ENCODE measurements at regions of chr4 and their contacts with region 1.

Region 1: DNA sequence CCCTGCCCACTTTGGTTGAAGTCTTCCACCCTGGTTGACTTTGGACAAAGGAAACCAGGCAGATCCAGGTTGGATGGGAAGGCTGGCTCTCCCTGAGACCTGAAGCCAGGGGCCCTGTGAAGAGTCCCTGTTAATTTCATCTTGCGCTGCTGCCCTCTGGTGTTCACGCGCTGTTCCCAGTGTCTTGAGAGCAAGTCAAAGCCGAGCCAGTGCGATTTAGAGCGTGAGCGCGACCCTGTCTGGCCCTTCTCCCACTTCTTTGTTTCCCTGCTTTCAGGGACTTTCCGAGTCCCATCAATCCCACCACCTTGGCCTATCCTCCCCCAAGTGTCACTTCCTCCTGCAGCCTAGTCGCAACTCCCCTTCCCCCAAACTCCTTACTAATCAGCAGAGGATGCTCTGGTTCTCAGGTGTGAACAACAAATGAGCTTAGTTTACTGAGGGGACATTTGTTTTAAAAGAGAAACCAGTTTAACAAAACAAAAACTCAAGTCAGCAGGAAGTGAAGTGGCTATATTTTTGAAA is 25.8 kb upstream of the CHRNA9 start:
- DNase-seq: peak; percentile 90
- ATAC-seq: peak; percentile 85 to 92

Region 2: GRCh38 chr4:39469429-39470077 is 839.8 kb before region 1 on chr4:
- intact Hi-C with region 1: loop called in 1 of 2 experiments (anchors 5 kb)
- DNase-seq: peak; percentile 42
- ATAC-seq: peak; percentile 84 to 91

Region 3: GRCh38 chr4:40056716-40057585 is 252.4 kb before region 1 on chr4 and contains the start of gene N4BP2:
- intact Hi-C with region 1: loop called (anchors 5 to 10 kb)
- DNase-seq: peak; percentile 87
- ATAC-seq: peak; percentile 87 to 88
- total RNA-seq, gene N4BP2: 4.3 to 4.7 TPM

Region 4: DNA sequence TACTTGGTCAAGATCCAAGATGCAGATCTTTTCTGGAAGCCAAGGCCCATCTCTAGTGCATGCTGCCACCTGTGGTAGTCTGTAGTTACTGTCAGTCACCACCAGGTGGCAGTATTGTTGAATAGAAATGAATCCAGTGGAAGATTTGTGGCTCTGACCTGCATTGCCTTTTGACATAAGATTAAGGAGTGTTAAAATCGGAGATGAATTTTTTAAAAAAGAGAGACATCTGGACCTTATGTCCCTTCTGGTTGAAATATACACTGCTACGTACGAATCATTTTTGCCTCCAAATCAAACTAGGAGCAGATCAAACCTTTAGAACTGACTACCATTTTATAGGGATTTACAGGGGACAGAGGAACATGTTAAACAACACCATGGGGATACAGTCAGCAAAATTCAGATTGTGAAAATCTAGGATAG is 159.3 kb before region 1 on chr4:
- intact Hi-C with region 1: loop called (anchors 5 kb)
- DNase-seq: peak; percentile 36
- ATAC-seq: peak in 1 of 2 donors; percentile 68

Region 5: DNA sequence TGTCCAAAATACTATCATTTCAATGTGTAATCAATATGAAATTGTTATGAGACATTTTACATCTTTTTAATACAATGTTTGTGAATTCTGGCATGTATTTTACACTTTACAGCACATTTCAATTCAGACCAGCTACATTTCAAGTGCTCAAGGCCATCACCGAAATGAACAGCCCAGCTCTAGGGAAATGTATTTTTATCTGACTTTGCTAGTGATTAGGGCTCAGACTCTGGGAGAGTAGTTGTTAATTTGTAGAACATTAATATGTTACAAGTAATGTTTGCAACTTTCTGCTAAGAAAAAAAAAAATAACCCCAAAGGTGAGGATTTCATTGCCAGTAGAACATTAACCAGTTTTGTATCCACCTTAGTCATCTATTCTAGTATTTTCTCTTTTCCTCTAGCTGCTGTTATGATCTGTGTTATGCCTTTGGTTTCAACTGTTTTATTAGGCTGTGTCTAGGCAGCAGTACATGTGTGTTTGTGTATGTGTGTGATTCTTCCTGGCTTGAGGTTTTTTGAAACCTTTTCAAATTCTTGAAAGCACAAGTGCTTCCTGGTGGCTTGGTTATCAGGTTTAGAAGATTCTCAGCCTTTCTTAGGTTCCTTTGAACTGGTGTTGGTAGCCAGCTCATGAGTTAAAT is 566.3 kb after region 1 on chr4:
- intact Hi-C with region 1: no loop called
- DNase-seq: no peak
- ATAC-seq: peak in 1 of 2 donors; percentile 39